ENCODE measurements at regions of chr19 and their contacts with region 1.

Region 1: GRCh38 chr19:31349160-31349881 is at the start of gene TSHZ3:
- DNase-seq: peak; percentile 84
- H3K4me3 ChIP-seq: peak within 1 kb of the TSS; percentile 73 to 79 (median 75)
- H3K27ac ChIP-seq: peak within 1 kb of the TSS; percentile 57
- H3K4me1 ChIP-seq: peaks cover 20% of the 10 kb centered on the region
- H3K27me3 ChIP-seq: no peaks in the 10 kb centered on the region
- CTCF ChIP-seq: no peak
- total RNA-seq, gene TSHZ3: 10.3 to 11.3 TPM

Region 2: GRCh38 chr19:30682999-30683536 is 666.3 kb before region 1 on chr19:
- CTCF ChIA-PET with region 1: no interaction called
- dilution Hi-C with region 1: no loop called
- in situ Hi-C with region 1: no loop called
- intact Hi-C with region 1: loop called (anchors 10 kb)
- DNase-seq: peak; percentile 68
- H3K4me3 ChIP-seq: no peak overlapping the region
- H3K27ac ChIP-seq: no peak overlapping the region
- H3K4me1 ChIP-seq: no peaks in the 10 kb centered on the region
- H3K27me3 ChIP-seq: no peaks in the 10 kb centered on the region
- CTCF ChIP-seq: peak; percentile 79 to 87

Region 3: DNA sequence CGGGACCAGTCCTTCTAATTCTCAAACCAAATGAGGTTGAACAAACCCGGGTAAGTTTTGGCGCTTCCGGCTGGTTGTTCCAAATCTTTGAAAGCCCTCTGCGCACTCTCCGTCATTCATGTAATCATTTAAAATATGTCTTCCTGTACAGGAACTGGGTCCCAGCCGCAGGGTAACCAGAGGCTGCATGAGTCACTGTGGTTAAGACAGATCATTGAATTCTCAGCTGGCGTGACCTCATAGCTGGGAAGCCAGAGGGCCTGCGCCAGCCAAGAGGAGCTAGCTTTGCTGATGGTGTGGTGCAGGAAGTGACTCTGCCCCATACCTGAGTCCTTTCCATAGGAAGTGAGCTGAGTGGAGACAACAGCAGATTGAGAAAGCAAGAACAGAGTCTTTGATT is 135.2 kb before region 1 on chr19:
- CTCF ChIA-PET with region 1: no interaction called
- dilution Hi-C with region 1: no loop called
- in situ Hi-C with region 1: no loop called
- intact Hi-C with region 1: loop called (anchors 2 kb)
- DNase-seq: peak; percentile 99
- H3K4me3 ChIP-seq: no peak overlapping the region
- H3K27ac ChIP-seq: peak overlapping the region; percentile 77
- H3K4me1 ChIP-seq: peaks cover 20% of the 10 kb centered on the region
- H3K27me3 ChIP-seq: no peaks in the 10 kb centered on the region
- CTCF ChIP-seq: no peak

Region 4: GRCh38 chr19:31270897-31271296 is 78.4 kb before region 1 on chr19:
- CTCF ChIA-PET with region 1: no interaction called
- dilution Hi-C with region 1: loop called (anchors 10 kb)
- in situ Hi-C with region 1: no loop called
- intact Hi-C with region 1: no loop called
- DNase-seq: no peak
- H3K4me3 ChIP-seq: no peak overlapping the region
- H3K27ac ChIP-seq: no peak overlapping the region
- H3K4me1 ChIP-seq: no peaks in the 10 kb centered on the region
- H3K27me3 ChIP-seq: no peaks in the 10 kb centered on the region
- CTCF ChIP-seq: no peak

Region 5: DNA sequence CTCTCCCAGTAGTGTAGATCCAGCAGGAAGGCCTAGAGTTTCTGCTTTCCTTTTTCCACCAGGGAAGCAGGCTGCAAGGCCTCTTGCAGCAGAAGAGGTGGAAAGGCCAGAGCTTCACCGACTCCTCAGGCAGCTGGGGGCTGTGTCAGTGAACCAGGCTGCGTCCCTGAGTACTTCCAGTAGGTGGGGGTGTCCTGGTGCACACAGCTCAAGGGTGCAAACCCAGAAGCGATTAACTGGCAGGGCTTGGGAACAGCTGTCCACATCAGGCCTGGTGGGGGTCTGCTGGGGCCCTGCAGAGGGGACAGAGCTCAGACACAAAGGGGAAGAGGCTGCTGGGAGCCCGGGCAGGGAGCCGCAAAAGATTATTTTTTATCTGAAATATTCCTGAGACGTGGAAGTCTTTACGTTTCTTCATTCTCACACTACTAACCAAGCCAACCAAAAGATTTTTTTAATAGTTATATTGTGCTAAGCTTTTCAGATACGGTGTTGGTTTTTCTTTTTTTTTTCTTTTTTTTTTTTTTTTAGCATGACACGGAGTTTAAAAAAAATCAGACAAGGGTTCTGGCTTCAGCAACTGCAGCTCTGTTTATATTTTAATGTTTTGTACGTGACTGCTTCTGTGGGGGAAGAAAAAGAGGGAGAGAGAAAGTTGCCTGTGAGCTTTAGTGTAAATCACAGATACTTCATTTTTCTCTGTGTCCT is 11.1 kb before region 1 on chr19:
- CTCF ChIA-PET with region 1: no interaction called
- dilution Hi-C with region 1: no loop called
- in situ Hi-C with region 1: no loop called
- intact Hi-C with region 1: loop called (anchors 1 kb)
- DNase-seq: no peak
- H3K4me3 ChIP-seq: no peak overlapping the region
- H3K27ac ChIP-seq: no peak overlapping the region
- H3K4me1 ChIP-seq: peaks cover 45% of the 10 kb centered on the region
- H3K27me3 ChIP-seq: no peaks in the 10 kb centered on the region
- CTCF ChIP-seq: peak; percentile 40 to 48

Region 6: DNA sequence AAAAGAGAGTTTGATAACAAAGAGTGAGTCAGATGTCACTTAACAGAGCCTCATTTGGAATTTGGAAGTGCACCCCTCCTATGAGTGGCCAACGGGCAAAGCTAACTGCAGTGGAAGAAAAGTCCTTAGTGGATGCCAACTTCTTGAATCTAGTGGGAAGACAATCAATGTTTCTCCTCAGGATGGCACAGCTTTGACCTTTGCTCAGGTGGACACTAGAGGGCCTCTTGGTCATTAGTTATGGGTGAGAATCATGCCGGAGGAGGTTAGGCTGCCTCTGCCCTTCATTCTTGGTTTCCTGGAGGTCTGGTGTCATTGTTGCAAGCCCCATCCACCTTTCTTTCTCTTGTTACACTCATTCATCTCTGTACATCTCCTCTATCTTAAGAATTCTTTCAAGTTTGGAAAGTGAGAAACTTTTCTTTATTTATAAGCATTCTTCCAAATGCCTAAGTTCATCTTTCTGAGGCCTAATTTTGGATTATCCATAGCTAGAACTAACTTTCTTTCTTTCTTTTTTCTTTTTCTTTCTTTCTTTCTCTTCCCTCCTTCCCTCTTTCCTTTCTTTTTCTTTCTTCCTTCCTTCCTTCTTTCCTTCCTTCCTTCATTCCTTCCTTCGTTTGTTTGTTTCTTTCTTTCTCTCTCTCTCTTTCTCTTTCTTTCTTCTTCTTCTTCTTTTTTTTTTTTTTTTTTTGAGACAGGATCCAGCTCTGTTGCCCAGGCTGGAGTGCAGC is 327.1 kb after region 1 on chr19:
- CTCF ChIA-PET with region 1: no interaction called
- dilution Hi-C with region 1: no loop called
- in situ Hi-C with region 1: no loop called
- intact Hi-C with region 1: loop called (anchors 10 kb)
- DNase-seq: peak; percentile 14
- H3K4me3 ChIP-seq: no peak overlapping the region
- H3K27ac ChIP-seq: no peak overlapping the region
- H3K4me1 ChIP-seq: peaks cover 6% of the 10 kb centered on the region
- H3K27me3 ChIP-seq: no peaks in the 10 kb centered on the region
- CTCF ChIP-seq: peak; percentile 19 to 31